MCF 10A (cell line): ENCODE measurements at regions of chr1 and their contacts with region 1.

Region 1: GRCh38 chr1:206846487-206846886 is 18.9 kb upstream of the IL20 start:
- DNase-seq: peak; percentile 34
- H3K4me3 Mint-ChIP-seq: no peak overlapping the region
- H3K27ac Mint-ChIP-seq: no peak overlapping the region
- H3K4me1 Mint-ChIP-seq: peaks cover 21% of the 10 kb centered on the region
- H3K27me3 Mint-ChIP-seq: peaks cover 23% of the 10 kb centered on the region
- CTCF ChIP-seq: no peak

Region 2: DNA sequence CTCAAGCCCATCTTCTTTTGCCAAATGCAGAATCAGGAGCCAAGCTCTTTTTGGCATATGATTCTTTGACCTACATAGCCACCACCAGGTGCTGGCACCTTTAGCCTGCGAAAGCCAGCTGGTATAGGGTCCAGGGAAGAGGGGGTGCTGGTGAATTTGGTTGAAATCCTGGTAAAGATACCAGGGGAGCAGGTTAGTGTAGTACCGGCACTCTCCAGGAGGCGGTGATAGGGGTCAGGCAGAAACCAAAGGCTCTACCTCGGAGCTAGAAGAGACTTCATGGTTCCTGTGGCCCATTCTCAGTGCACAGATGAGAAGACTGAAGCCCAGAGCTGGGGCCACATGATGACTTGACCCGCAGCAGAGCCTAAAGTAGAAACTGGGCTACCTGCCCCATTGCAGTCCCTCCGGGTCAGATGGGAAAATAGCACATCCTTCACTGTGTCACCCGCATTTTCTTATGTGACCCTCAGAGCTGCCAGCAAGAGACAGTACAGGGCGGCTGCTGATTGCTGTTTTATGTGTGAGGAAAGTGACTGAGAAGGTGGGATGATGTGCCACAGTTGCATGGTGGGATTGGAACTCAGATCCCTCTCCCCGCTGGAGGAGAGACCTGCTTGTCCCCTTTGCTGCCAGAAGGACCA is 111.9 kb before region 1 on chr1:
- CTCF ChIA-PET with region 1: interaction called, 11 read pairs
- POLR2A ChIA-PET with region 1: no interaction called
- intact Hi-C with region 1: no loop called
- DNase-seq: peak; percentile 73
- H3K4me3 Mint-ChIP-seq: no peak overlapping the region
- H3K27ac Mint-ChIP-seq: peak overlapping the region; percentile 6
- H3K4me1 Mint-ChIP-seq: peaks cover 9% of the 10 kb centered on the region
- H3K27me3 Mint-ChIP-seq: no peaks in the 10 kb centered on the region
- CTCF ChIP-seq: peak; percentile 97

Region 3: GRCh38 chr1:206834711-206835110 is 11.8 kb before region 1 on chr1:
- CTCF ChIA-PET with region 1: interaction called, 9 read pairs
- POLR2A ChIA-PET with region 1: interaction called, 36 read pairs
- intact Hi-C with region 1: no loop called
- DNase-seq: peak; percentile 63
- H3K4me3 Mint-ChIP-seq: no peak overlapping the region
- H3K27ac Mint-ChIP-seq: peak overlapping the region; percentile 21
- H3K4me1 Mint-ChIP-seq: peaks cover 31% of the 10 kb centered on the region
- H3K27me3 Mint-ChIP-seq: no peaks in the 10 kb centered on the region
- CTCF ChIP-seq: no peak

Region 4: DNA sequence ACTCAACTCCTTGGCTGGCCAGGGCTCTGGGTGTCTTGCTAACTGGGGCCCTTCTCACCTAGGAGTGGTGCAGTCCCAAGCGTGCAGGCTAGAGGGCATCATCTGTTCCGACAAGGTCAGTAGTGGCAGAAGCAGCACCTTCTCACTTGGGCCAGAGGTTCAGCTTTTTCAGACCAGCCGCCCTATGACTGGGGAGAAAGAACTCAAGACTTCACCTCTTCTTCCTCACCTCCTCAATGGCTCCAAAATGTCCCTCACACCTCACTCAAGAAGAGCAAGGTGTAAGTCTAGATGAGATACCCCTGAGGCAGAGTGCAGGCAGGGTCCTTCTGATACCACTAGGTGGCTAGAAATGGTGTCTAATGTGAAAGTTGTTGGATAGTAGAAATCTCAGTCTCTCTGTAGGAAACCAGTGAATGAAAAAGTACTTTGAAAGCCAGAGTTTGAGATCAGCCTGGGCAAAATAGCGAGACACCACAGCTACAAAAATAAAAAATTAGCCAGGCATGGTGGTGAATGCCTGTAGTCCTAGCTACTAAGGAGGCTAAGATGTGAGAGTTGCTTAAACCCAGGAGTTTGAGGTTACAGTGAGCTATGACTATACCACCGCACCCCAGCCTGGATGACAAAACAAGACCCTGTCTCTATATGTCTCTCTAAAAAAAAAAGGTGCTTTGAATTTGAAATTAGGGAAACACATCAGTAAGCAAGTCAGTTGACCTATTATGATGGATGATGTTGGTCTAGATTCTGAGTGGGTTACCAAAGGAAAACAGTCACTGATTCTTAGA is 10.4 kb after region 1 on chr1:
- CTCF ChIA-PET with region 1: interaction called, 10 read pairs
- POLR2A ChIA-PET with region 1: no interaction called
- intact Hi-C with region 1: no loop called
- DNase-seq: peak; percentile 54
- H3K4me3 Mint-ChIP-seq: no peak overlapping the region
- H3K27ac Mint-ChIP-seq: no peak overlapping the region
- H3K4me1 Mint-ChIP-seq: no peaks in the 10 kb centered on the region
- H3K27me3 Mint-ChIP-seq: peaks cover 18% of the 10 kb centered on the region
- CTCF ChIP-seq: peak; percentile 17